Left colon (tissue), 2 donors: ENCODE measurements at regions of chr11 and their contacts with region 1.

Region 1: DNA sequence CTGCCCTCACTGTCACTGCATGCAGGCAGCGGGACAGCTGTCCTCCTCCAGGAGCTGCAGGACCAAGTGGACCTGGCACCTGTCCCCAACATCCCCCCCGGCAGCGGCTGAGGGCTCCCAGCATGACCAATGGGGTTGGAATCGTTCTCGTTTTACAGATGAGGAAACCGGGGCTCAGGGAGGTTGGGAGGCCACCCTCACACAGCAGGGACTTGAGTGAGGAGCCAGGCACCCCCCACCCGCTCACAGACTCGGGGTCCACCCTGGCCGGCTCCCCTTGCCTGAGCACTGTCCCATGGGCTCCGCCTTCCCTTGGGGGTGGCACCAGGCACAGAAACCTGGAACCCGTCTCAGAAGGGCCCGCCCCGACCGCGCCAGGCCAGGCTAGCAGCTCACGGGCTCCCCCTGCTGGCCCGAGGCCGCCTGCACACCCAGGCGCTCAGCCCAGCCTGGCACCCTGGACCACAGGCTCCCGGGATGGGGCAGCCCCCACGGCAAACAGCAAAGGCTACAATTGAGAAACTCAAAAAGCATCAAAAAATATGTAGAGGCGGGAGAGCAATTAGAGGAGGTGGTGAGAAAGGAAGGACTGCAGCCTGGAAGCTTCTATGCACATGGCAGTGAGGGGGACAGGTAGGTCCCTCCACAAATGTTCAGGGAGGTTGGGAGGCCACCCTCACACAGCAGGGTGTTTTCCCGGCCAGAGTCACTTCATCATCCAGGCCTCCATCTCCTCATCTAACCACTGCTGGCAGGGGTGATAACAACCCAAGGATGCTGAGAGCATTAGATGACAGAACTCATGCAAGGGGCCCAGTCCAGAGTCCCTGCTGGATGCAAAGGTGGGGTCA is 12.8 kb downstream of the MACROD1 start:
- DNase-seq: peak; percentile 42 to 73
- ATAC-seq: peak; percentile 89

Region 2: DNA sequence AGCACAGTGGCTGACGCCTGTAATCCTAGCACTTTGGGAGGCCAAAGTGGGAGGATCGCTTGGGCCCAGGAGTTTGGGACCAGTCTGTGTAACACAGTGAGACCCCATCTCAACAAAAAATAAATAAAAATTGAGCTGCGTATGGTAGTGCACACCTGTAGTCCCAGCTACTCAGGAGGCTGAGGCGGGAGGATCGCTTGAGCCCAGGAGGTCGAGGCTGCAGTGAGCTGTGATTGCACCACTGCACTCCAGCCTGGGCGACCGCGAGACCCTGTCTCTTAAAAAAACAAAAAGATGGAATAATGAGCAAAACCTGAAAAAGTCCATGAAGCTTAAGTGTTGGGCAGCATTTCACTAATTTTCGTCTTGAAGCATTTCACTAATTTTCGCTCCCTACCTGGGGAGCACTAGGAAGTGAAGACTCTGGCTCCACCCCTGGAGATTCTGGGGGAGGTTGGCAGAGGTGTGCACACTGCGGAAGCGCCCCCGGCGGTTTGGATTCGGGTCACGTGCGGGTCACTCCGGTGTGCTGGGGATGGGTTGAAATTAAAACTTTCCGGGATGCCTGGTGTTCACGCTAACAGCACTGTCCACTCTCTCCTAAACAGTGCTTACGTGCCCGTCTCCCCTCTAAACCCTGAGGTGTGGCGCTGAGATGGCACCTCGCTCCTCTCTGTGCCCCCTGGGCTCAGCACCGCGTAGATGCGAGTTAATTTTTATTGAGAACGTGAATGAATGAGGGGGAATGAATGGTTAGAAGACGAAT is 215.2 kb before region 1 on chr11:
- intact Hi-C with region 1: no loop called
- DNase-seq: peak; percentile 46 to 54
- ATAC-seq: peak; percentile 7

Region 3: DNA sequence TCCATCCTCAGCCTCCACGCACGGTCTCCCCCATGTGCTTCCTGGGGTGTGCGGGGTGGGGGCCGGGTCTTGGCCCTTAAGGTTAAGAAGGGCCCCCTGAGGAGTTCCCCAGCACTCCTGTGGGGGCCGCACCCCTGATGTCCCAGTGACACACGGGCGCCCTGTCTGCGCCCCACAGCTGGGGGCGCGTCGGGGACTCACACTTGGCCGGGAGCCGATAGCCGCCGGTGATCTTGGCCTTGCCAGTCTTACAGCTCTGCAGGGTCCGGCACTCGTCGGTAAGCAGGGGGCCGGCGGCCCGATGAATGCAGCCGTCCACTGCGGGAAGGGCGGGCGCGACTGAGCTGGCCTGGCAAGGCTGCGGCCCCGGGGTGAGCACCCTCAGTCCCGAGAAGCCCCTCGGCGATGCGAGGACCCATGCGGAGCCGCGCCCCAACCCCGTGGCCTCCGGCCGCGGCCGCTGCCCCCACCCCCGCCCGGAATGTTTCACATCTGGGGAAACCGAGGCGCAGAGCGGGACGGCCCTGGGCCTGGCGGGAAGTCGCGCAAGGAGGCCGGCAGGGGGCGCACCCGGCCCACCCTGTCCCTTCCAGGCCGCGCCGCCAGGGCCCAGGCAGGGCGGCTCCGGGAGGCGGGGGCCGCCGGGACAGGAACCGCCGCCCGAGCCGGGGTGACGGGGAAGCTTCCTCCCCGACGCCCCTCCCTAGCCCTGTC is 152.9 kb before region 1 on chr11:
- intact Hi-C with region 1: loop called (anchors 5 kb)
- DNase-seq: peak in 1 of 2 donors; percentile 74
- ATAC-seq: peak; percentile 79

Region 4: GRCh38 chr11:64094463-64095260 is 58.4 kb before region 1 on chr11:
- intact Hi-C with region 1: no loop called
- DNase-seq: no peak
- ATAC-seq: no peak